ENCODE measurements at regions of chr11 and their contacts with region 1.

Region 1: DNA sequence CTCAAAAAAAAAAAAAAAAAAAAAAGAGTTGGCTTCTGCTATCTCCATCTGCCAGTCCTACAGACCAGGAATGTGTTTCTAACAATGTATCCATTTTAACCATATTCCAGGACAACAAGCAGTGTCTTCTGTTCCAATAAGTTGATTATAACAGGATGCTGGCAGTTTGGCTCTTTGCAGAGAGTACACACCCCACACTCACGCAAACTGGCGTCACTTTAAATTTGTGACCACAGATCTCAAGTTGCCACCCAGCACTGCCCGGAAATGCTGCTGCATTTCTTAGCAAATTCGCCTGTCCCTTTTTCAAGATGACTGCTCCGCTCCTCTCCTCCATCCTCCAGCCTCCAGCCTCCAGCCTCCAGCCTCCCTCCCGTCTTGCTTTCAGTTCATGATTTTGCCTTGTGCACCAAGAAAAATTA is 44.3 kb downstream of the SCGB1A1 start:
- DNase-seq: no peak
- H3K4me3 ChIP-seq: no peak overlapping the region
- H3K27ac ChIP-seq: no peak overlapping the region
- H3K27me3 ChIP-seq: no peaks in the 10 kb centered on the region
- CTCF ChIP-seq: no peak

Region 2: DNA sequence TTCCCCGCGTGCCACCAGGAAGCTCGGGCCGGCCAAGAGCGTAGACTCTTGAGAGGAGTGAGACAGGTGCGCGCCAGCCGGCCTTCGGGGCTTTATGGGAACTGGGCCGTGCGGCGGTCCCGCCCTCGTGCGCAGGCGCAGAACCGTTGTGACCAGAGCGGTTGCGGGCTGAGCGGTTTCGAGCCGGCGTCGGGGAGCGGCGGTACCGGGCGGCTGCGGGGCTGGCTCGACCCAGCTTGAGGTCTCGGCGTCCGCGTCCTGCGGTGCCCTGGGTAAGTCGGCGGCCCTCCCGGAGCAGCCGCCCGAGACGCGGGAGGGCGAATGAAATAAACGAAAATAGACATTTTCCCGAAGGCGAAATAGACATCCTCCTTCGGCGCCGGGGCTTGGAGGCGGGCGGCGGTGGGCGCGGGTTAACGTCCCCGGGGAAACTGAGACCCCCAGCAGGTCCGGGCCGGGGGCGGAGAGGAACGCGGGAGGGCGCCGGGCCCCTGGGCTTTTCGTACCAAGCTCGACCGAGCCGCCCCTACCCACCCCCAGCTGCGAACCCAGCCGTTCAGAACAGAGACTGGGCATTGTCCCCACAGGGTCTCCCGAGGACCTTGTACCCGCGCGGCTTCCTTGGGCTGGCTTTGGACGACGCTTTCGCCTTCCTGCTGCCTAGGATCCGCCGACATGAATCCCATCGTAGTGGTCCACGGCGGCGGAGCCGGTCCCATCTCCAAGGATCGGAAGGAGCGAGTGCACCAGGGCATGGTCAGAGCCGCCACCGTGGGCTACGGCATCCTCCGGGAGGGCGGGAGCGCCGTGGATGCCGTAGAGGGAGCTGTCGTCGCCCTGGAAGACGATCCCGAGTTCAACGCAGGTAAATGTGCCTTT is 125.6 kb before region 1 on chr11 and contains the start of gene ASRGL1:
- CTCF ChIA-PET with region 1: no interaction called
- POLR2A ChIA-PET with region 1: no interaction called
- DNase-seq: no peak
- H3K4me3 ChIP-seq: peak within 1 kb of the TSS; percentile 57
- H3K27ac ChIP-seq: no peak within 1 kb of the TSS
- H3K27me3 ChIP-seq: peaks cover 35% of the 10 kb centered on the region
- CTCF ChIP-seq: no peak
- polyA plus RNA-seq, gene ASRGL1: 0.48 and 0.61 TPM in 2 replicates

Region 3: DNA sequence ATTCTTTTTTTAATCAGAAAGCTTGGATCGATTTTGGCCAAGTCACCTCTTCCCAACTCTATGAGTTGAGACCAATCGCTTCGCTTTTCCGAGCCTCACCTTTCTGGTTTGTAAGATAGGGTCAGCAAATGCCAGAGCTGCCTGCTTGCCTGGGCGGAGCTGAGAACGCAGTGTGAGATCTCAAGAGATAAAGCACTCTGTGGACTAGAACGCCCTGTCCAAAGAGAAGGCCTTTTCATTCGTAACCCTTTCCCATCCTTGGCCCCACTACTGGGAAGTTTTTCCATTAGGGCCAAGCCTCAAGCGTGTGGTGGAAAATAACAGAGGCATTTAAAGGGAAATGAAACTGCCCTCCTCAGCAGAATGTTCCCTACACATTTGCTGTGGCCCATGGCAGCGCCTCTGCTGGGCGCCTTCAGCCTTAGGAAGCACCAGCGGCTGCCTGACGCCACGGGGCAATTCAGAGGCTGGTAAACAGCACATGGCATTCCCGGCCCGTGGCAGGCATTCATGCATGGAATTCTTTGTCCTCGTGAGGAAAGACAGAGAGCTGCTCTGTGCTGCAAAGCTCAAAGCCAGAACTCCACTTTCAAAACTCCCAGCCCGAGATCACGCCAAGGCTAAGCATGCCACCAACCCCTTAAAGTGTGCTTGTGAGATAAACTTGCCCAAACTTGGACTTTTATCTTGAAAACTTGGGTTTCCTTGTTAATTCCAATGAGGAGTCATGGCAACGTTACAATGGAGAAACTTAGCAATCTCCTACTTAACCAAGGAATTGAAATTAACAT is 45.3 kb after region 1 on chr11:
- CTCF ChIA-PET with region 1: no interaction called
- POLR2A ChIA-PET with region 1: interaction called, 10 read pairs
- DNase-seq: no peak
- H3K4me3 ChIP-seq: no peak overlapping the region
- H3K27ac ChIP-seq: peak overlapping the region; percentile 21
- H3K27me3 ChIP-seq: no peaks in the 10 kb centered on the region
- CTCF ChIP-seq: peak; percentile 48

Measured in AG04450 (cell line).